B cell (primary cell): ENCODE measurements at regions of chr14 and their contacts with region 1.

Region 1: DNA sequence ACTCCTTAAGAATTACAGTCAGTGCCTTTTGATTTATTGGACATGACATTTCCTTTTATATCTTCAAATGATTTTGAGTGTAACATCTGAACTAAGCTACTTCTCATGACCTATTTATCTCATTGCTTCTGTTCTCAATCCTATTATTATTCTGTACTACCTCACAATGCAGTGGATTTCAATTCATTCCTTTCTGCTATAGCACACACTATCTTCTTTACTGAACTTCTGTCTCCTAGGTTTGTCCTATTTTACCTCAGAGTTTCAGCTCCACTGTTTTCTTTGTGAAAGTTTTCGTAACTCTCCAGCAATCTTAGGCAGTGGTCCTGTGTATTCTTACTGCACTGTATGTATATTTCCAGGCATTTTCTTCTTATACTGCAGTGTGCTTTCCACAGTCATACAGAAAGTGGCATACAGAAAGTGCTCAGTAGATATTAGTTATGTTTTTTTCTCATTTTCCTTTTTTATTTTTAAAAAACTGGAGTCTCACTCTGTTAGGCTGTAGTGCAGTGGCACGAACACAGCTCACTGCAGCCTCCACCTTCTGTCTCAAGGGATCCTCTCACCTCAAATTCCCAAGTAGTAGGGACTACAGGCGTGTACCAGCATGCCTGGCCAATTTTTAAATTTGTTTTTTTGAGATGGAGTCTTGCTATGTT is 368.6 kb upstream of the RGS6 start:
- DNase-seq: no peak
- ATAC-seq: no peak
- H3K4me3 ChIP-seq: no peak overlapping the region
- H3K4me3 Mint-ChIP-seq: no peak overlapping the region
- H3K27ac ChIP-seq: peak overlapping the region in 1 of 2 donors; percentile 17
- H3K27ac Mint-ChIP-seq: no peak overlapping the region
- H3K4me1 ChIP-seq: peaks cover 10 to 24% of the 10 kb centered on the region in 2 donors
- H3K4me1 Mint-ChIP-seq: peaks cover 43% of the 10 kb centered on the region
- H3K27me3 ChIP-seq: no peaks in the 10 kb centered on the region
- H3K27me3 Mint-ChIP-seq: no peaks in the 10 kb centered on the region
- CTCF ChIP-seq: no peak

Region 2: DNA sequence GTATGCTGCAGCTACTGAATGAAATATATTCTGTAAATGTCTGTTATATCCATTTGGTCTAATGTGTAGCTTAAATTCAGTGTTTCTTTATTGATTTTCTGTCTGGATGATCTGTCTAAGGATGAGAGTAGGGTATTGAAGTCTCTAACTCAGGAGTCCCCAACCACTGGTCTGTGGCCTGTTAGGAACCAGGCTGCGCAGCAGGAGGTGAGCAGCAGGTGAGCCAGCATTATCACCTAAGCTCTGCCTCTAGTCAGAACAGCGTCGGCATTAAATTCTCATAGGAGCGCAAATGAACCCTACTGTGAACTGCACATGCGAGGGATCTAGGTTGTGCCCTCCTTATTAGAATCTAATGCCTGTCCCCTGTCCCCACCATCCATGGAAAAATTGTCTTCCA is 38.9 kb after region 1 on chr14:
- CTCF ChIA-PET with region 1: no interaction called
- POLR2A ChIA-PET with region 1: no interaction called
- intact Hi-C with region 1: loop called (anchors 5 kb)
- DNase-seq: no peak
- ATAC-seq: no peak
- H3K4me3 ChIP-seq: no peak overlapping the region
- H3K4me3 Mint-ChIP-seq: no peak overlapping the region
- H3K27ac ChIP-seq: no peak overlapping the region
- H3K27ac Mint-ChIP-seq: no peak overlapping the region
- H3K4me1 ChIP-seq: peaks cover 10 to 11% of the 10 kb centered on the region in 2 donors
- H3K4me1 Mint-ChIP-seq: peaks cover 51% of the 10 kb centered on the region
- H3K27me3 ChIP-seq: no peaks in the 10 kb centered on the region
- H3K27me3 Mint-ChIP-seq: no peaks in the 10 kb centered on the region
- CTCF ChIP-seq: no peak